GM10248 (cell line): ENCODE measurements at regions of chr7 and their contacts with region 1.

Region 1: GRCh38 chr7:130758429-130759056 is 24.5 kb upstream of the KLF14 start:
- DNase-seq: peak; percentile 48
- CTCF ChIP-seq: peak; percentile 37

Region 2: GRCh38 chr7:130733931-130734814 is 24.4 kb before region 1 on chr7 and contains the start of gene KLF14:
- CTCF ChIA-PET with region 1: interaction called, 25 read pairs
- POLR2A ChIA-PET with region 1: no interaction called
- DNase-seq: peak; percentile 64
- CTCF ChIP-seq: no peak

Region 3: DNA sequence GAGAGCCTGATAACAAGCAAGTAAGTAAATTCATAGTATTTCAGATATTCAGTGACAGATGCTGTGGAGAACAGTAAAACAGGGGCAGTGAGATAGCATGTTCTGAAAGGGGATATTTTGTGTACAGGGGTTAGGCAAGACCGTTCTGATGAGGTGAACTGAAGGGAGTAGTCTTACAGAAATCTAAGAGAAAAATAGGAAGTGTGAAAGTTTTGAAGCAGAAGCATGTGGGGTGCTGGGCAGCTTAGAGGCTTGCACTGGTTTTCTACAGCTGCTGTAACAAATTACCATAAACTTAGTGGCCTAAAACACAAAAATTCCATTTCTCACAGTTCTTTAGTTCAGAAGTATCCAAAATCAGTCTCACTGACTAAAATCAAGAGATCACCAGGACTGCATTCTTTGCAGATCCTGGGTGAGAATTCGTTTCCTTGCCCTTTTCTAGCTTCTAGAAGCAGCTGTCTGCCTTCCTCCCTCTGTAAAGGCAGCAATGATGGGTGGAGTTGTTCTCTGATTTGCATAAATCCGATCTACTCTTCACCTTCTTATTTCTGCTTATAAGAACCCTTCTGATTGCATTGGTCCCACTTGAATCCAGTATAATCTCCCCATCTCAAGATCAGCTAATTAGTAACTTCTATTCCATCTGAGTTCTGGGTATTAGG is 17.1 kb before region 1 on chr7:
- CTCF ChIA-PET with region 1: interaction called, 11 read pairs
- POLR2A ChIA-PET with region 1: interaction called, 5 read pairs
- DNase-seq: no peak
- CTCF ChIP-seq: no peak

Region 4: DNA sequence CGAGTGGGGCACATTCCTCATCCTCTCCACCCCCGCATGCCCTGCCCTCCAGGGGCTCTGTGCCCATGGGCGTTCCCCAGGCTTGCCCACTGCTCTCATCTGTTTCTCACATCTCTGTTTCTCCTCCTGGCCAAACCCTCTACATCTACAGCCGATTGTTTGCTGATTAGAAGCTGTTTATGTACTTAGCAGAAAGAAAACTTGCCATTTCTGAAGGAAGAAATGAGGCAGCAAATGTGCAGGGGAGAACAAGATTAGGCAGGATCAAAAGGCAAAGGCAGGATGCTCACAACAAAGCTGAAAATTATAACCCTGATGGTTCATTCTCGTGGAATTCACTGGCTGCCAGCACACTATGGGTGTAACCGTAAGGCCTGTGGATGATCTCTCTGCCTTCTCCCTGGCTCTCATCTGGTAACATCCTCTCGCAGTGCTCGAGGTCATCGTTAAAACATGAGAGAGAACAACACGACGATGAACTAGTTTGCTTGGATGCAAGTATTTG is 87.1 kb after region 1 on chr7:
- CTCF ChIA-PET with region 1: no interaction called
- POLR2A ChIA-PET with region 1: no interaction called
- DNase-seq: no peak
- CTCF ChIP-seq: no peak